HCT116 (cell line): ENCODE measurements at regions of chr14 and their contacts with region 1.

Region 1: GRCh38 chr14:60862286-60862685 is 118.6 kb downstream of the TRMT5 start:
- DNase-seq: no peak
- ATAC-seq: no peak
- H3K4me3 ChIP-seq: no peak overlapping the region
- H3K27ac ChIP-seq: no peak overlapping the region
- H3K4me1 ChIP-seq: peaks cover 6 to 10% of the 10 kb centered on the region in 2 experiments; a peak in 3 of 4 replicates
- H3K27me3 ChIP-seq: no peaks in the 10 kb centered on the region
- CTCF ChIP-seq: no peak
- POLR2A ChIP-seq: no peak
- RAD21 ChIP-seq: no peak

Region 2: DNA sequence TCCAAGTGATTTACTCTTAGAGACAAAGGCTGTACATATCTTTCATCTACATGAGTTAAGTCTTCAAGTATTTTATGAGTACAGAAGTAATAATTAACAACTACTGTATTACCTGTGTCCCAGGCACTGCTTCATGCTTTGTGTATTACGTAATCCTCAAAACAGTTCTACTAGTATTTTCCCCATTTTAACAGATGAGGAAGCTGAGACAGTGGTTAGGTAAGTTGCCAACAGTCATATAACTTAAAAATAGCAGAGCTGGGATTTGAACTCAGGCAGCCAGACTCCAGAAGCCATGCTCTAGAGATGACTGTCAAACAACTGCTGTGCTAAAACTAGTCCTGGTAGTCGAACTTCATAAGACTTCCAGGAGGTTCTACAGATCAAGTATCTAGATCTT is 107.9 kb after region 1 on chr14:
- CTCF ChIA-PET with region 1: no interaction called
- POLR2A ChIA-PET with region 1: no interaction called
- RAD21 ChIA-PET with region 1: no interaction called
- intact Hi-C with region 1: loop called (anchors 5 kb)
- DNase-seq: no peak
- ATAC-seq: no peak
- H3K4me3 ChIP-seq: no peak overlapping the region
- H3K27ac ChIP-seq: no peak overlapping the region
- H3K4me1 ChIP-seq: no peaks in the 10 kb centered on the region
- H3K27me3 ChIP-seq: no peaks in the 10 kb centered on the region
- CTCF ChIP-seq: no peak
- POLR2A ChIP-seq: no peak
- RAD21 ChIP-seq: no peak